Calu3 (cell line): ENCODE measurements at regions of chr6 and their contacts with region 1.

Region 1: DNA sequence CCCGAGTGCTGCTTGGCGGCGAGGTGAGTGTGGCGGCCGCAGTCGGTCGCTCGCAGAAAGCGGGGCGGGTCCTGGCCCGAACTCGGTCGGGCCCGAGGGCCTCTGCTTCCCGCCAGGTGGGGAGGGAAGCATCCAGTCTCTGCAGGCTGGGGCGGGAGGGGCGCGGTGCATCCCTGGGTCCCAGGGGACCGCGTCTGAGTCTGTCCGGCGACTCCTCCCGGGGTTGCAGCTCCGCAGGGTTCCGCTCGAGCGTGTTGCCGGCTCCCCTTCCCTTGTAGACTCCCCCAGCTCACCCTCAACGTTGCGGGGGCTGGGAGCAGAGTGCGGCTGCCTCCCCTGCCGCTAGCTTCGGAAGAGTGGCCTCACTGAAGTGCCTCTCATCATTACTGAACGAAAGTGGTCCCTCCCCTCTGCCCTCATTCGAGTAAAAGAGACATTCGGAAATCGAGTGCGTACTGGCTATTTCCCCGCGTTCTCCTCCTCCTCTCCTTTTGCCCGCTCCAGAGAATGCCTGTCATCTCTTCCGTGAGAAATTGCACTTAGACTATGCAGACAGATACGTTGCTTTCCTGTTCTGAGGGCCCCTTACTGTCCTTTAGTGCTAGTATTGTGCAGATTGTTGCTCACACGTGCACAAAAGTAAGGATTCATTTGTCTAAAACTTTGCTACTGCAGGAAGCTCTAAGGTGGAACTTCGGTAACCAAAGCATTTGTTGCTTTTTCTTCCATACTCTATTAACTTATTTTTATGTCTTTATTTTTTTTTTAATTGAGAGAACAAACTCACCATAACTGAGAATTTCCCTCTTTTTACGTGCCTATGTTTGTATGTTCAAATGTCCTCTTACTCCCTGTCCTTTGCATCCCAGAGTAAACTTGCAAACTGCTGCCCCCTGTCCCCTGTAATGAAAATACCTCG is 751 bp downstream of the MAP3K4 start:
- DNase-seq: peak; percentile 57
- H3K4me3 Mint-ChIP-seq: peak overlapping the region; percentile 95
- H3K27ac Mint-ChIP-seq: peak overlapping the region; percentile 97
- H3K4me1 Mint-ChIP-seq: peaks cover 16% of the 10 kb centered on the region
- H3K27me3 Mint-ChIP-seq: no peaks in the 10 kb centered on the region
- CTCF ChIP-seq: peak; percentile 50

Region 2: GRCh38 chr6:160750276-160750689 is 242.0 kb before region 1 on chr6:
- CTCF ChIA-PET with region 1: interaction called, 5 read pairs
- intact Hi-C with region 1: loop called (anchors 2 kb)
- DNase-seq: peak; percentile 61
- H3K4me3 Mint-ChIP-seq: no peak overlapping the region
- H3K27ac Mint-ChIP-seq: no peak overlapping the region
- H3K4me1 Mint-ChIP-seq: no peaks in the 10 kb centered on the region
- H3K27me3 Mint-ChIP-seq: peaks cover 12% of the 10 kb centered on the region
- CTCF ChIP-seq: peak; percentile 89

Region 3: GRCh38 chr6:160766989-160767660 is 225.2 kb before region 1 on chr6:
- CTCF ChIA-PET with region 1: no interaction called
- intact Hi-C with region 1: loop called (anchors 5 kb)
- DNase-seq: peak; percentile 83
- H3K4me3 Mint-ChIP-seq: peak overlapping the region; percentile 76
- H3K27ac Mint-ChIP-seq: peak overlapping the region; percentile 40
- H3K4me1 Mint-ChIP-seq: peaks cover 7% of the 10 kb centered on the region
- H3K27me3 Mint-ChIP-seq: no peaks in the 10 kb centered on the region
- CTCF ChIP-seq: peak; percentile 65

Region 4: GRCh38 chr6:160791459-160791858 is 200.9 kb before region 1 on chr6:
- CTCF ChIA-PET with region 1: no interaction called
- intact Hi-C with region 1: loop called (anchors 5 kb)
- DNase-seq: peak; percentile 49
- H3K4me3 Mint-ChIP-seq: peak overlapping the region; percentile 20
- H3K27ac Mint-ChIP-seq: peak overlapping the region; percentile 83
- H3K4me1 Mint-ChIP-seq: peaks cover 44% of the 10 kb centered on the region
- H3K27me3 Mint-ChIP-seq: no peaks in the 10 kb centered on the region
- CTCF ChIP-seq: no peak

Region 5: GRCh38 chr6:160930547-160931377 is 61.6 kb before region 1 on chr6:
- CTCF ChIA-PET with region 1: no interaction called
- intact Hi-C with region 1: loop called (anchors 5 kb)
- DNase-seq: peak; percentile 75
- H3K4me3 Mint-ChIP-seq: peak overlapping the region; percentile 63
- H3K27ac Mint-ChIP-seq: no peak overlapping the region
- H3K4me1 Mint-ChIP-seq: no peaks in the 10 kb centered on the region
- H3K27me3 Mint-ChIP-seq: no peaks in the 10 kb centered on the region
- CTCF ChIP-seq: peak; percentile 72

Region 6: DNA sequence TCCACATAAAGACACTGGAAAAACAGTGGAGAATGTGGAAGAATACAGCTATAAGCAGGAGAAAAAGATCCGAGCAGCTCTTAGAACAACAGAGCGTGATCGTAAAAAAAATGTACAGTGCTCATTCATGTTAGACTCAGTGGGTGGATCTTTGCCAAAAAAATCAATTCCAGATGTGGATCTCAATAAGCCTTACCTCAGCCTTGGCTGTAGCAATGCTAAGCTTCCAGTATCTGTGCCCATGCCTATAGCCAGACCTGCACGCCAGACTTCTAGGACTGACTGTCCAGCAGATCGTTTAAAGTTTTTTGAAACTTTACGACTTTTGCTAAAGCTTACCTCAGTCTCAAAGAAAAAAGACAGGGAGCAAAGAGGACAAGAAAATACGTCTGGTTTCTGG is 56.3 kb after region 1 on chr6:
- CTCF ChIA-PET with region 1: no interaction called
- intact Hi-C with region 1: no loop called
- DNase-seq: no peak
- H3K4me3 Mint-ChIP-seq: no peak overlapping the region
- H3K27ac Mint-ChIP-seq: no peak overlapping the region
- H3K4me1 Mint-ChIP-seq: no peaks in the 10 kb centered on the region
- H3K27me3 Mint-ChIP-seq: no peaks in the 10 kb centered on the region
- CTCF ChIP-seq: no peak

Region 7: DNA sequence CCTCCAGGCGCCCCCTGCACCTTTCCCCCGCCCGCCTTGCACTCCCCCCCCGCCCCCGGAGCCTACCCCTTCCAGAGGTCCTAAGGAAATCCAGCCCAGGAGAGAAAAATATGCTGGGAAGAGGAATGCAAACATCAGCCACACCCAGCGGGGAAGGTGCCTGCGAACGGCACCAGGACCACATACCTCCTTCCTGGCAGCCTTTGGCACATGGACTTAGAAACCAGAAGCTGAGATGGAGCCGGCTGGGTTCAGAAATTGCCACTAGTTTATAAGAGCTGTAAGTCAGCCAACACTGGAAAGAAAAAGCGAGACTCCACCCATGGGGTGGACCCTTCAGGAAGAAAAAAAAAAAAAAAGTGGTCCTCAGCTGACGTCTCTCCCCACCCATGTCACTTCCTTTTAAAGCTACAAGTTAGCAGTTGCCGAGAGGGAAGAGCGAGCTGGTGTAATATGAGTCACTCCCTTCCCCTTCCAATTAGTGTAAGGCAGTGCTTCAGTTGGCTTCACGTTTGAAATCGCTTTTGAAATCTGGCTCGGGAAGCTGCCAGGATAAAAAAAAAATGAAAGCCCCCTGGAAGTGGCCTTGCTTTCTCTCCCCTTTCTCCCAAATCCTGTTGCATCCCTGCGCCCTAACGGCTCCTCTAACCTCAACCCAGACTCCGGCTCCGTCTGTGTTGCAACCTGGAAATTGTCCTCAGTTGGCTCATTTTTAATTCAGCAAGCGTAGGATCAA is 281.6 kb after region 1 on chr6 and contains the start of gene AGPAT4:
- CTCF ChIA-PET with region 1: no interaction called
- intact Hi-C with region 1: loop called (anchors 10 kb)
- DNase-seq: peak; percentile 75
- H3K4me3 Mint-ChIP-seq: peak within 1 kb of the TSS; percentile 75
- H3K27ac Mint-ChIP-seq: peak within 1 kb of the TSS; percentile 96
- H3K4me1 Mint-ChIP-seq: peaks cover 12% of the 10 kb centered on the region
- H3K27me3 Mint-ChIP-seq: no peaks in the 10 kb centered on the region
- CTCF ChIP-seq: no peak
- total RNA-seq, gene AGPAT4: 8.7 and 11.3 TPM in 2 replicates